ENCODE measurements at regions of chr2 and their contacts with region 1.

Region 1: DNA sequence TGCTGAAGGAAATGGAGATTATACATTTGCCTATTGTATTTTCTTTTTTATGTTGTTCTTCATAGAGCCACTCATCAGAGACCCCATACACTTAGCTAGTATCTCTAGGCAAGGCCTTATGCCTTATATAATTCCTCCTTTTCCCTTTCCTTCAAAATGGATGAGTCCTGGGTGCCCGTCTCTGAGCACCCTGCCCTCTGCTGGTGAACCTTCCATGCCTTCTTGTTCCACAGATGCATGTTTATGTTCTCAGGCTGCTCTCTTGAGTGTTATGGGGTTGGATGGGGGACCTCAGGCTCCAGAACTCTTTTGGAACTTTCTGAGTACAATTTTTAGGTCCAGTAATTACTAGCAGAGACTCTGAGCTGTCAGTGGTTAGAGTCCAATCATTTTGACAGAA is 368.6 kb upstream of the SPRED2 start:
- DNase-seq: no peak
- ATAC-seq: peak in 3 of 4 donors; percentile 56 to 61 (median 60)
- H3K4me3 ChIP-seq: no peak overlapping the region
- H3K27ac ChIP-seq: no peak overlapping the region
- H3K4me1 ChIP-seq: no peaks in the 10 kb centered on the region
- H3K27me3 ChIP-seq: no peaks in the 10 kb centered on the region
- CTCF ChIP-seq: peak; percentile 56

Region 2: DNA sequence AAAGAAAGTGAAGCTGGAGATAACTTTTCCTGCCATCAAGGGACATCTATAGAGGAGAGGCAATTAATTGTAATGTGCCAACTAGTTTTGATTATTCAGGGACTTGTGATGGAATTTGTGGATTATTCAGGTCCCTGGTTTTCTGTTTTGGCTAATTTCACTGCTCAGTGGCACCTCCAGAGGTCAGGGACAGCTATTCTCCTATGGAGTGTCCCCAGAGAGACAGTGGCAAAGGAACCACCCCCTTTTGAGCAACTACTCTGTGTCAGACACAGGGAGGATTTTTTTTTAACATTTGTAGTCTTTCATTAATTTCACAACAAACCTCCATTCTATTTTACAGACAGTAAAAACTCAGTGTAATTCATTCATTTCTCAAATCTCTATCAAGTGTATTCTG is 162.6 kb before region 1 on chr2:
- intact Hi-C with region 1: loop called (anchors 5 to 10 kb)
- DNase-seq: no peak
- ATAC-seq: no peak
- H3K4me3 ChIP-seq: no peak overlapping the region
- H3K27ac ChIP-seq: no peak overlapping the region
- H3K4me1 ChIP-seq: no peaks in the 10 kb centered on the region
- H3K27me3 ChIP-seq: peaks cover 0 to 26% (median 4%) of the 10 kb centered on the region in 3 donors
- CTCF ChIP-seq: no peak

Region 3: DNA sequence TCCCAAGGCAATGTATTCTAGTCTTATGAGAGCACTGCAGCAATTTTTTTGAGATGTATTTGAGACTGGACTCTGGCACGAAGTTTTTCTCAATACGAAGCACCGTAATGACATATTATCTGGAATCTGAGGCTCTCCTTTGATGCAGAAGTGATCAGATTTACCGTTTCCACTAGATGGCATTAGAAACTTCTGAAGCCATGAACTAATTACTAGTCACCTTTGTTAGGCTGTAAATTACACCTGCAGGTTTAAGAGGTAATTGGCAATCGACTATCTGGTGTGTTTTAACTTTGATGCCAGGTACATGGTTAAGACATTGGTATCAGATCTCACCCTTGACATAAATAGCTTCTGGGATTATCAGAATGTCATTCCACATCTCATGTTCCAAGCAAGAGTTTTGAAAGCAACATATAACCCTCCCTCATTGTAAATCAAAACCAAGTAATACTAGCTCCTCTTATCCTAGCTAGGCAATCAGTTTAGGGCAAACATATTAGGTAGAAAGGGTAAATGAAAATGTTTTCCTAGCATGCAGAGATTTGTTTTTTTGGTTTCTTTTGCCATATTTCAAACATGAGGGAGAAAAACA is 114.0 kb before region 1 on chr2:
- intact Hi-C with region 1: no loop called
- DNase-seq: no peak
- ATAC-seq: peak; percentile 46 to 86 (median 80)
- H3K4me3 ChIP-seq: peak overlapping the region; percentile 49
- H3K27ac ChIP-seq: peak overlapping the region; percentile 64
- H3K4me1 ChIP-seq: peaks cover 3% of the 10 kb centered on the region
- H3K27me3 ChIP-seq: no peaks in the 10 kb centered on the region
- CTCF ChIP-seq: peak; percentile 9

Measured in psoas muscle (tissue), 8 donors.